ENCODE measurements at regions of chr10 and their contacts with region 1.

Region 1: DNA sequence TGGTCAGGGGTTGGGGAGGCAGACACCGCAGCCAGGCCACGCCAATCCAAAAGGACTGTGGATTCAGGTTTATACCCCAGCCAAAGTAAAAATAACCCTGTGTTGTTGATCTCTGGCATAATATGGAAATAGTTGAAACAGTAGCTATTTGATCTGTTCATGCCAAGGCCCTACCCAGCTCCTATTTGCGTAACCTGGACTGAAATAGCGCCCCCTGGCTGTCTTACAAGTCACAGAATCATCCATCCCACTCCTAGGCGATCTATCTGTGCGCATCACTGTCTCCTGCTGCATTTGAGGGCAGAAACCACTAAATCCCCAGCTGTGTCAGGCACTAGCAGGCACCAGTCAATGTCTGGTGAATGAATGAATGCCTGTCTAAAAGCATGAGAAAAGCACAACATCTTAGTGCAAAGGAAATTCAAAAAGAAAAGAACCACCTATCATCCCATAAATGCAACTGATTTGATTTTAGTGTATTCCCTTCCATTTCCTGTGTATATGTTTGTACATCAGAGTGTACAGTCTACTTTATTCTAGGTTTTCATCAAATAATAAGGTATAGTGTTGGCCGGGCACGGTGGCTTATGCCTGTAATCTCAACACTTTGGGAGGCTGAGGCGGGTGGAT is 160.0 kb downstream of the SLIT1 start:
- DNase-seq: peak in 4 of 6 donors; percentile 50 to 66 (median 56)
- ATAC-seq: peak; percentile 69 to 80 (median 77)
- H3K4me3 ChIP-seq: no peak overlapping the region
- H3K27ac ChIP-seq: no peak overlapping the region
- H3K4me1 ChIP-seq: peaks cover 5 to 13% (median 6%) of the 10 kb centered on the region in 3 donors
- H3K27me3 ChIP-seq: no peaks in the 10 kb centered on the region
- CTCF ChIP-seq: peak; percentile 36 to 70 (median 54)

Region 2: DNA sequence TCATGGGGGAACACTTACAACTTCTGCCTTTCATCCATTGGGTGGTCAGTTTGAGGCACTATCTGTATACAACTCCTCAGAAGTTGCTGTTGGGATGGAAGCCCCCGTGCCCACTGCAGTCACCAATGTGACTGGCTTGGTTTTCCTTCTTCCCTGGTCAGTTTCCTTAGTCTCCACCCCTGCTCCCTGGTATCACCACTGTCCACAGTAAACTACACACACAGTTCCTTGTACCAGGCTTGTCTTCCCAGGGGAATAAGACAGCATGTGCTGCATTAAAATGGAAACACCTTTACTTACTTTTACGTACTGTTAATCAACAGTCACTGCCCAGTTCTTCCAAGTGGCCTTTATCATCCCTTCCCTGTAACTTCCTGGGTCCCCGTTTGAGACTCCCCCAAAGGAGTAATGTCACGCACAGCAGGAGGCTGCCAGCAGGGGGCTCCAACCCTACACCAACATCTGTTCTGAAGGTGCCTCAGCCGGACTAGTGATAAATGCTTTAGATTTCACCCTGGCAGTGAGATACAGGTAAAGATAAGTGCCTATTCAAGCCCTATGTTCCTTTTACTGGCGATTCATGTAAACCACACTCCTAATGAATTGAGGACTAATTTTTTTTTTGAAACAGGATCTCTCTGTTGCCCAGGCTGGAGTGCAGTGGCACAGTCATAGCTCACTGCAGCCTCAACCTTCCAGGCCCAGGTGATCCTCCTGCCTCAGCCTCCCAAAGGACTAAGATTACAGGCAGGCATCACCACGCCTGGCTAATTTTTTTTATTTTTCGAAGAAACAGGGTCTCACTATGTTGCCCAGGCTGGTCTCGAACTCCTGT is 260.1 kb before region 1 on chr10:
- intact Hi-C with region 1: loop called in 1 of 3 experiments (anchors 5 kb)
- DNase-seq: peak; percentile 44 to 85 (median 66)
- ATAC-seq: peak; percentile 78 to 96 (median 93)
- H3K4me3 ChIP-seq: no peak overlapping the region
- H3K27ac ChIP-seq: no peak overlapping the region
- H3K4me1 ChIP-seq: no peaks in the 10 kb centered on the region
- H3K27me3 ChIP-seq: no peaks in the 10 kb centered on the region
- CTCF ChIP-seq: peak; percentile 79 to 81 (median 80)

Region 3: DNA sequence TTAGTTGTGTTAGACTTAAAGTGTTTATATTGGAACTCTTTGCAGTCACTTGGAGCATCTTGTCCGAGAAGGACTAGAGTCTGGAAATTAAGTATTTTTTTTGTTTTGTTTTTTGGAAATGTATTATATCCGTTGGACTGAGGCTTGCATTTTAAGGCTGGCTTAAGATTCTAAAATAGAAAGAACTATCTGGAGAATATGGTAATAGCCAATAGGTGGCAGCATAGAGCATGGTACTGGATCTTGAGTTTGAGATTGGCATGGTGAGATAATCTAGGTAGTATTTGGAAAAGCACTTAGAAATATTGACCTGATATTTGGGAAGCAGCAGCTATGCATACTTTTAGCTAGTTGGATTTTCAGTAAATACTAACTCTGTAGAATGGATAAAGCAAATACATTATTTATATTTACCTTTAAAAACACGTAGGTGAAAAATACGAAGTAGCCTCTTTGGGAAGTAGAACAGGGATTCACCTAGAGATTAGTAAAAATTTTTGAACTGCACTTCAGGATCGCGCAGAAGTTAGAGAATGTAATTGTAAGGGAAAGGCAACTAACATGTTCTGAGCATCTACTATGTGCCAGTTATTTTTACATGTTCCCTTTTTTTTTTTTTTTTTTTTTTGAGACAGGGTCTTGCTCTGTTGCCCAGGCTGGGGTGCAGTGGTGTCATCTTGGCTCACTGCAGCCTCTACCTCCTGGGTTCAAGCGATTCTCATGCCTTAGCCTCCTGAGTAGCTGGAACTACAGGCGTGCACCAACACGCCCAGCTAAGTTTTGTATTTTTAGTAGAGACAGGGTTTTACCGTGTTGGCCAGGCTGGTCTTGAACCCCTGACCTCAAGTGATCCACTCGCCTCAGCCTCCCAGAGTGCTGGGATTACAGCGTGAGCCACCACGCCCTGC is 115.0 kb before region 1 on chr10:
- intact Hi-C with region 1: no loop called
- DNase-seq: no peak
- ATAC-seq: peak; percentile 70 to 91 (median 83)
- H3K4me3 ChIP-seq: no peak overlapping the region
- H3K27ac ChIP-seq: no peak overlapping the region
- H3K4me1 ChIP-seq: peaks cover 0 to 16% (median 15%) of the 10 kb centered on the region in 3 donors
- H3K27me3 ChIP-seq: no peaks in the 10 kb centered on the region
- CTCF ChIP-seq: peak; percentile 29 to 52 (median 41)